T-cell (primary cell): ENCODE measurements at regions of chr19 and their contacts with region 1.

Region 1: DNA sequence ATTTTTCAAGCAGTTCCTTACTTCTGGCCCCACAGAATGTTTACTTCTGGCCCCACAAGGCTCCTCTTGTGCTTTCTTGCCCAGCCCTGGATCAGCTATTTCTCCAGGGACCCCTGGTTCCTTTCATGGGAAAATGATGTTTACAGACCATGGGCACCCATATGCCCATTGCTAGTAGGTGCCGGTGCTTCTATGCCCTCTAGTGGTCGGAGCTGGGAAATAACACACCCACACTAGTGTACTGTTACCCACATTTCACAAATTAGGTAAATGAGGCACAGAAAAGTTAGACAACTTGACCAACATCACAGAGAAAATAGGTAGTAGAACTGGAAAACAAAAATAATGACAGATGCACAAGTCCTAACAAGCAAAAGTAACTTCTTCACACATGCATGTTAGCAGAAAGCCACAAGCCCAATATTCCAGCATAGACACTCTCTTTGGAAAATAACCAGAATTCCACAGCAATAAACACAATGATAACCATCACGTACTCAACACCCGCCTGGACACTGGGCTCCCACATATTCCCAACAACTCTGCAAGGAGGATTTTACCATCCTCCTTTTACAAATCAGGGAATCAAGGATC is 1.3 kb upstream of the CEACAM6 start:
- DNase-seq: peak; percentile 20 to 79 (median 62)
- ATAC-seq: peak; percentile 84 to 89 (median 86)
- H3K4me3 ChIP-seq: no peak overlapping the region
- H3K4me3 Mint-ChIP-seq: no peak overlapping the region
- H3K27ac ChIP-seq: no peak overlapping the region
- H3K27ac Mint-ChIP-seq: no peak overlapping the region
- H3K4me1 ChIP-seq: peaks cover 0 to 9% of the 10 kb centered on the region in 2 experiments
- H3K4me1 Mint-ChIP-seq: peaks cover 3 to 7% (median 4%) of the 10 kb centered on the region in 3 donors
- H3K27me3 ChIP-seq: peaks cover 0 to 27% of the 10 kb centered on the region in 2 experiments
- H3K27me3 Mint-ChIP-seq: peaks cover 33 to 50% of the 10 kb centered on the region in 2 donors

Region 2: GRCh38 chr19:41734617-41735016 is 19.4 kb before region 1 on chr19:
- CTCF ChIA-PET with region 1: no interaction called
- POLR2A ChIA-PET with region 1: no interaction called
- DNase-seq: no peak
- ATAC-seq: no peak
- H3K4me3 ChIP-seq: no peak overlapping the region
- H3K4me3 Mint-ChIP-seq: no peak overlapping the region
- H3K27ac ChIP-seq: no peak overlapping the region
- H3K27ac Mint-ChIP-seq: no peak overlapping the region
- H3K4me1 ChIP-seq: peaks cover 0 to 2% of the 10 kb centered on the region in 2 experiments
- H3K4me1 Mint-ChIP-seq: peaks cover 4 to 12% (median 5%) of the 10 kb centered on the region in 3 donors
- H3K27me3 ChIP-seq: peaks cover 0 to 3% of the 10 kb centered on the region in 2 experiments
- H3K27me3 Mint-ChIP-seq: peaks cover 26 to 27% of the 10 kb centered on the region in 2 donors

Region 3: DNA sequence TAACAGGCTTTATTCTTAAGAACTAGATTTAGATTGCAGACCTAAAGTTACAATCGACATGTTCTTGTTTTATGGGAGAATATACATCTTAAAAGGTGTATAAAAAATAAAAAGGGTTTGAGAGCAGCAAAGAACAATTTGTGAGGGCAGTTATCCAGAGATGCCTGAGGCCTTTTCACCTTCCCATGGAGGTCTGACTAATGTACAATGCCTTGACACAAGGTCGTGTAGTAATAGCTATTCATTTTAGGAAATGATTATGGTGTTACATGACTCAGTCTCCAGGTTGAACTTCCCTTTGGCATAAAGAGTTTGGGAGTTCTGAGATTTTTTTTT is 21.3 kb after region 1 on chr19:
- CTCF ChIA-PET with region 1: interaction called, 5 to 14 read pairs
- POLR2A ChIA-PET with region 1: interaction called, 5 to 6 read pairs
- DNase-seq: no peak
- ATAC-seq: no peak
- H3K4me3 ChIP-seq: no peak overlapping the region
- H3K4me3 Mint-ChIP-seq: peak overlapping the region in 1 of 3 donors; percentile 68
- H3K27ac ChIP-seq: no peak overlapping the region
- H3K27ac Mint-ChIP-seq: no peak overlapping the region
- H3K4me1 ChIP-seq: peaks cover 15 to 29% of the 10 kb centered on the region in 2 experiments
- H3K4me1 Mint-ChIP-seq: peaks cover 41 to 51% (median 42%) of the 10 kb centered on the region in 3 donors
- H3K27me3 ChIP-seq: peaks cover 0 to 23% of the 10 kb centered on the region in 2 experiments
- H3K27me3 Mint-ChIP-seq: peaks cover 40 to 68% of the 10 kb centered on the region in 2 donors

Region 4: GRCh38 chr19:41785653-41786052 is 31.6 kb after region 1 on chr19:
- CTCF ChIA-PET with region 1: interaction called, 7 to 59 read pairs
- POLR2A ChIA-PET with region 1: no interaction called
- DNase-seq: peak; percentile 45 to 91 (median 65)
- ATAC-seq: peak; percentile 90 to 97 (median 94)
- H3K4me3 ChIP-seq: no peak overlapping the region
- H3K4me3 Mint-ChIP-seq: peak overlapping the region in 1 of 3 donors; percentile 5
- H3K27ac ChIP-seq: no peak overlapping the region
- H3K27ac Mint-ChIP-seq: peak overlapping the region in 1 of 2 donors; percentile 15
- H3K4me1 ChIP-seq: peaks cover 10 to 11% of the 10 kb centered on the region in 2 experiments
- H3K4me1 Mint-ChIP-seq: peaks cover 15 to 17% (median 17%) of the 10 kb centered on the region in 3 donors
- H3K27me3 ChIP-seq: peaks cover 2 to 38% of the 10 kb centered on the region in 2 experiments
- H3K27me3 Mint-ChIP-seq: peaks cover 48 to 64% of the 10 kb centered on the region in 2 donors

Region 5: GRCh38 chr19:41792513-41793412 is 38.7 kb after region 1 on chr19:
- CTCF ChIA-PET with region 1: interaction called, 5 to 10 read pairs
- POLR2A ChIA-PET with region 1: no interaction called
- DNase-seq: peak in 32 of 35 experiments; percentile 11 to 70 (median 42)
- ATAC-seq: peak in 2 of 4 experiments; percentile 46 to 66
- H3K4me3 ChIP-seq: no peak overlapping the region
- H3K4me3 Mint-ChIP-seq: no peak overlapping the region
- H3K27ac ChIP-seq: no peak overlapping the region
- H3K27ac Mint-ChIP-seq: no peak overlapping the region
- H3K4me1 ChIP-seq: no peaks in the 10 kb centered on the region
- H3K4me1 Mint-ChIP-seq: peaks cover 5 to 12% (median 6%) of the 10 kb centered on the region in 3 donors
- H3K27me3 ChIP-seq: peaks cover 0 to 42% of the 10 kb centered on the region in 2 experiments
- H3K27me3 Mint-ChIP-seq: peaks cover 47 to 57% of the 10 kb centered on the region in 2 donors

Region 6: DNA sequence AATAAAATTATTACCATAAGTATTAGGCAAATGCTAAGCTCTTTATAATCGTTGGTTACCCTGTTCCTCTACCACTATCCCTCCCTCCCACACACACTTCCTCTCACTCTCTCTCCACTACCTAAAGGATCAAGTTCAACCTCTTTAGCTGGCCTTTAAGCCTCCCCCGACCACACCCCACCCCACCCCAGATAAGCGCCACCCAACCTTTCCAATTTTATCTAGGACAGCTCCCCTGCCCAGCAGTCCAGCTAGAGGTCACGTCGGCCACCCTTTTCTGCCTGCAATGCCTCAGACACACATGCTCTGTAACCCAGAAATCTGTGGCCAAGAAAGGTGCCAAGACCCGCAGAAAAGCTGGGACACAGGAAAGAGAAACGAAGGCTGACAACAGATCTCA is 89.3 kb after region 1 on chr19:
- CTCF ChIA-PET with region 1: no interaction called
- POLR2A ChIA-PET with region 1: no interaction called
- DNase-seq: no peak
- ATAC-seq: no peak
- H3K4me3 ChIP-seq: no peak overlapping the region
- H3K4me3 Mint-ChIP-seq: no peak overlapping the region
- H3K27ac ChIP-seq: no peak overlapping the region
- H3K27ac Mint-ChIP-seq: no peak overlapping the region
- H3K4me1 ChIP-seq: no peaks in the 10 kb centered on the region
- H3K4me1 Mint-ChIP-seq: no peaks in the 10 kb centered on the region
- H3K27me3 ChIP-seq: peaks cover 0 to 28% of the 10 kb centered on the region in 2 experiments
- H3K27me3 Mint-ChIP-seq: peaks cover 4 to 8% of the 10 kb centered on the region in 2 donors